ENCODE measurements at regions of chr14 and their contacts with region 1.

Region 1: GRCh38 chr14:58107947-58108552 is 44.0 kb downstream of the ARMH4 start:
- DNase-seq: peak; percentile 79
- ATAC-seq: peak; percentile 82
- H3K4me3 ChIP-seq: no peak overlapping the region
- H3K27ac ChIP-seq: no peak overlapping the region
- H3K4me1 ChIP-seq: no peaks in the 10 kb centered on the region
- H3K27me3 ChIP-seq: peaks cover 22% of the 10 kb centered on the region
- CTCF ChIP-seq: peak; percentile 91
- POLR2A ChIP-seq: no peak
- RAD21 ChIP-seq: peak; percentile 88

Region 2: GRCh38 chr14:57797160-57797559 is 310.9 kb before region 1 on chr14:
- CTCF ChIA-PET with region 1: no interaction called
- POLR2A ChIA-PET with region 1: no interaction called
- dilution Hi-C with region 1: no loop called
- in situ Hi-C with region 1: no loop called
- intact Hi-C with region 1: no loop called
- DNase-seq: no peak
- ATAC-seq: no peak
- H3K4me3 ChIP-seq: no peak overlapping the region
- H3K27ac ChIP-seq: no peak overlapping the region
- H3K4me1 ChIP-seq: no peaks in the 10 kb centered on the region
- H3K27me3 ChIP-seq: no peaks in the 10 kb centered on the region
- CTCF ChIP-seq: no peak
- POLR2A ChIP-seq: no peak
- RAD21 ChIP-seq: no peak

Region 3: DNA sequence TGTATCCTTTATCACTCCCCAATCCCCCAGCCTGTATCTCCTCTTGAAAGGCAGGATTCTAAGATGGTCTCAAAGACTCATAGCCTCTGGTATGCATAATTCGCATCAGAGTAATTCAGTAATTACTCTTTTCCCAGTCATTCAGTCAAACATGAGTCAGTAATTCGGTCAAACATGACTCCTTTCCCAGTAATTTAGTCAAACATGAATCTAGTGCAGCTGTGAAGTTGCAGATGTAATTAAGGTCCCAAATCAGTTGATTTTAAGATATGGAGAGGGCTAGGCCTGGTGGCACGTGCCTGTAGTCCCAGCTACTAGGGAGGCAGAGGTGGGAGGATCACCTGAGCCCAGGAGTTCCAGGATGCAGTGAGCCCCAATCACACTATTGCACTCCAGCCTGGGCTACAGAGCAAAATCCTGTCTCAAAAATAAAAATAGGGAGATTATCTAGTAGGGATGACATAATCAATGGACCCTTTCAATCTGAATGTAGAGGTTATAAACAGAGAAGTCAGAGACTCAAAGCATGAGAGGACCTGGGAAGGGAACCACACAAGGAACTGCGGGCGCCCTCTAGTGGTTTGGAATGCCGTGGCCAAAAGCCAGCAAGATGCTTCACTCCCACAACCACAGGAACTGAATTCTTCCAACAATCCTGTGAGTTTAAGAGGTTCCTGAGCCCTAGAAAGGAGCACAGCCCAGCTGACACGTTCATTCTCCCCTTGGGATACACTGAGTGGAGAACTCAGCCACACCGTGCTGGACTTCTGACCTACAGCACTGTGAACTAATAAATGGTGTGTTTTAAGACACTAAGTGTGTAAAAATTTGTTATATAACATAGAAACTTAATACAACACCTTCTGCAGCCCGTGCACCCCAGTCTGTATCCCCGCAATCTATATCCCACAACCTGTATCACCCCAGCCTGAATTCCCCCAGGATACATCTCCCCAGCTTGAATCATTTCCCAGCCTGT is 58.2 kb after region 1 on chr14:
- CTCF ChIA-PET with region 1: interaction called, 5 read pairs
- POLR2A ChIA-PET with region 1: no interaction called
- dilution Hi-C with region 1: no loop called
- in situ Hi-C with region 1: no loop called
- intact Hi-C with region 1: loop called (anchors 1 kb)
- DNase-seq: peak; percentile 78
- ATAC-seq: peak; percentile 78
- H3K4me3 ChIP-seq: no peak overlapping the region
- H3K27ac ChIP-seq: no peak overlapping the region
- H3K4me1 ChIP-seq: no peaks in the 10 kb centered on the region
- H3K27me3 ChIP-seq: peaks cover 6% of the 10 kb centered on the region
- CTCF ChIP-seq: peak; percentile 82
- POLR2A ChIP-seq: no peak
- RAD21 ChIP-seq: peak; percentile 66

Region 4: GRCh38 chr14:58244556-58245387 is 136.7 kb after region 1 on chr14 and contains the start of gene PSMA3:
- CTCF ChIA-PET with region 1: interaction called, 4 read pairs
- POLR2A ChIA-PET with region 1: no interaction called
- dilution Hi-C with region 1: no loop called
- in situ Hi-C with region 1: no loop called
- intact Hi-C with region 1: loop called (anchors 5 kb)
- DNase-seq: peak; percentile 95
- ATAC-seq: peak; percentile 95
- H3K4me3 ChIP-seq: peak within 1 kb of the TSS; percentile 80
- H3K27ac ChIP-seq: peak within 1 kb of the TSS; percentile 93
- H3K4me1 ChIP-seq: no peaks in the 10 kb centered on the region
- H3K27me3 ChIP-seq: no peaks in the 10 kb centered on the region
- CTCF ChIP-seq: no peak
- POLR2A ChIP-seq: peak; percentile 95
- RAD21 ChIP-seq: no peak
- total RNA-seq, gene PSMA3: 74.9 and 114 TPM in 2 replicates

Region 5: DNA sequence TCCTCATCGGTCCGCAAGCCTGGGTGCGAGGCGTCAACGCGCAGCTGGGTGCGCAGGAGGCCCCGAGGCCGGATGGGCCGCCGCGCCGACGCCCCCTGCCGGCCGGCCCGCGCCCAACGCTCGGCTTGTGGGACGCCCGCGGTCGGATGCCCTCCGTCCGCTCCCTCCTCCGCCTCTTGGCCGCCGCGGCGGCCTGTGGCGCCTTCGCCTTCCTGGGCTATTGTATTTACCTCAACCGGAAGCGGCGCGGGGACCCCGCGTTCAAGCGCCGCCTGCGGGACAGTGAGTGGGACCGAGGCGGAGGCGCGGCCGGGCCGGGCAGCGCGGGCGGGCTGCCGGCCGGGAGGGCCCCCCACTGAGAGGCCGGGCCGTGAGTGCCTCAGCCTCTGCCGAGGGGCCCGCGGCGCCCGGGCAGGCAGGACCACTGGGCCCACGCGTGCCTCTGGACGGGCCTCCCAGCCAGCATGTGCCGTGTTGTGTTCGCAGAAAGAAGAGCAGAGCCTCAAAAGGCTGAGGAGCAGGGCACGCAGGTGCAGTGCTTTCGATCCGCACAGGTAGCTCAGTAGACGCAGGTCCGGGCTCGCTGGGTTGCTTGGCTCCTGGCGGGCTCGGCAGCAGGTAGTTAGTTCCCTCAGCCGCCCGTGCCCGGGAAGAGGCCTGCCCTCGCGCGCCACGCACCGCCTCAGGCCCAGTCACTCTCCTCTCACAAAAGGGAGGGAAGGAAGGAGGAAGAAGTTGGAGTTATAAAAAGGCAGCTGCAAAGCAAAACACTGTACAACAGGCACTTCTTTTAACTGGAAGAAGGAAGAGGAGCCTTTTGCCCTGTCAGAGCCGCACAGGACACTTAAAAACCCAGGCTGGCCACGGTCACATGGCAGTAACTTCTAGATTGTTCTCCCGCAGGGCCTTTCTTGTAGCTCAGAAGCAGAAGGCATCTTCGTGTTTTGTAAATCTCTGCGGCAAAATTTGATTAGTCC is 288.1 kb after region 1 on chr14 and contains the start of gene TOMM20L:
- CTCF ChIA-PET with region 1: no interaction called
- POLR2A ChIA-PET with region 1: no interaction called
- dilution Hi-C with region 1: no loop called
- in situ Hi-C with region 1: loop called (anchors 25 kb)
- intact Hi-C with region 1: loop called (anchors 10 kb)
- DNase-seq: peak; percentile 48
- ATAC-seq: peak; percentile 97
- H3K4me3 ChIP-seq: peak within 1 kb of the TSS; percentile 44
- H3K27ac ChIP-seq: no peak within 1 kb of the TSS; the same call in 1 of the 2 replicates
- H3K4me1 ChIP-seq: peaks cover 2% of the 10 kb centered on the region; the same call in 1 of the 2 replicates
- H3K27me3 ChIP-seq: no peaks in the 10 kb centered on the region
- CTCF ChIP-seq: peak; percentile 81
- POLR2A ChIP-seq: no peak
- RAD21 ChIP-seq: peak; percentile 44
- total RNA-seq, gene TOMM20L: not detected in 2 replicates